H1 (cell line): ENCODE measurements at regions of chr3 and their contacts with region 1.

Region 1: GRCh38 chr3:45205126-45205525 is 21.0 kb downstream of the TMEM158 start:
- DNase-seq: no peak
- H3K4me3 ChIP-seq: no peak overlapping the region
- H3K27ac ChIP-seq: no peak overlapping the region
- H3K4me1 ChIP-seq: no peaks in the 10 kb centered on the region
- H3K27me3 ChIP-seq: no peaks in the 10 kb centered on the region
- CTCF ChIP-seq: no peak
- EP300 ChIP-seq: no peak
- POLR2A ChIP-seq: no peak
- RAD21 ChIP-seq: no peak

Region 2: GRCh38 chr3:45191924-45192417 is 13.2 kb before region 1 on chr3:
- CTCF ChIA-PET with region 1: interaction called, 35 read pairs
- POLR2A ChIA-PET with region 1: no interaction called
- DNase-seq: no peak
- H3K4me3 ChIP-seq: no peak overlapping the region
- H3K27ac ChIP-seq: no peak overlapping the region
- H3K4me1 ChIP-seq: no peaks in the 10 kb centered on the region
- H3K27me3 ChIP-seq: no peaks in the 10 kb centered on the region; a peak in 1 of 7 replicates
- CTCF ChIP-seq: no peak
- EP300 ChIP-seq: no peak
- POLR2A ChIP-seq: no peak
- RAD21 ChIP-seq: no peak

Region 3: GRCh38 chr3:45273681-45274515 is 68.8 kb after region 1 on chr3:
- CTCF ChIA-PET with region 1: no interaction called
- POLR2A ChIA-PET with region 1: no interaction called
- DNase-seq: no peak
- H3K4me3 ChIP-seq: no peak overlapping the region
- H3K27ac ChIP-seq: no peak overlapping the region
- H3K4me1 ChIP-seq: peaks cover 0 to 11% (median 6%) of the 10 kb centered on the region in 4 experiments; a peak in 5 of 7 replicates
- H3K27me3 ChIP-seq: peaks cover 0 to 4% (median 0%) of the 10 kb centered on the region in 4 experiments; a peak in 1 of 7 replicates
- CTCF ChIP-seq: no peak
- EP300 ChIP-seq: no peak
- POLR2A ChIP-seq: no peak
- RAD21 ChIP-seq: no peak